ENCODE measurements at regions of chr7 and their contacts with region 1.

Region 1: GRCh38 chr7:52431082-52431815 is 604.2 kb upstream of the POM121L12 start:
- DNase-seq: no peak
- H3K4me3 ChIP-seq: no peak overlapping the region
- H3K27ac ChIP-seq: no peak overlapping the region
- H3K4me1 ChIP-seq: no peaks in the 10 kb centered on the region
- H3K27me3 ChIP-seq: no peaks in the 10 kb centered on the region
- CTCF ChIP-seq: no peak

Region 2: DNA sequence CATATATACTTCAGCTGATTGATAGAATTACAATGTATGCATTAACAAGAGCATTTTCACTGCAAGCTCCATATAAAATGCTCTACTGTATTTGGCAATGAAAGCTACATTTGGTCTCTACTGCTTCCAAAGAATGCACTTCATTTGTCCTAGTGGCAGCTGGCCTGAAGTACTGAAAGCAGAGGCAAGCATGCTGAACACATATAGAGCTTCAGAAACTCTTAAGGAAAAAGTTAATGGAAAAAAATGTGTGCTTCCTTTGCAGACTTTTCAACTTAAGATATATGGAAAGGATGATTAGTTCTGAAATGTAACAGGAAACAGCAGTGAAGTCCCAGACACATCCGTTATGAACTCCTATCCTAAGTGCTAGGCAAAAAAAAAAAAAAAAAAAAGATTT is 67.1 kb after region 1 on chr7:
- CTCF ChIA-PET with region 1: no interaction called
- POLR2A ChIA-PET with region 1: no interaction called
- intact Hi-C with region 1: loop called (anchors 10 kb)
- DNase-seq: no peak
- H3K4me3 ChIP-seq: no peak overlapping the region
- H3K27ac ChIP-seq: no peak overlapping the region
- H3K4me1 ChIP-seq: no peaks in the 10 kb centered on the region
- H3K27me3 ChIP-seq: no peaks in the 10 kb centered on the region
- CTCF ChIP-seq: no peak

Measured in A673 (cell line).